GM23248 (cell line): ENCODE measurements at regions of chr1 and their contacts with region 1.

Region 1: GRCh38 chr1:77100870-77101269 is 118.4 kb downstream of the PIGK start:
- DNase-seq: peak; percentile 17
- H3K4me3 ChIP-seq: no peak overlapping the region
- H3K27ac ChIP-seq: no peak overlapping the region
- H3K4me1 ChIP-seq: peaks cover 8% of the 10 kb centered on the region
- H3K27me3 ChIP-seq: no peaks in the 10 kb centered on the region

Region 2: GRCh38 chr1:76901158-76901767 is 199.6 kb before region 1 on chr1:
- in situ Hi-C with region 1: loop called (anchors 10 kb)
- DNase-seq: peak; percentile 71
- H3K4me3 ChIP-seq: no peak overlapping the region
- H3K27ac ChIP-seq: no peak overlapping the region
- H3K4me1 ChIP-seq: no peaks in the 10 kb centered on the region
- H3K27me3 ChIP-seq: no peaks in the 10 kb centered on the region

Region 3: GRCh38 chr1:77413541-77414335 is 312.9 kb after region 1 on chr1:
- in situ Hi-C with region 1: no loop called
- DNase-seq: no peak
- H3K4me3 ChIP-seq: no peak overlapping the region
- H3K27ac ChIP-seq: no peak overlapping the region
- H3K4me1 ChIP-seq: peaks cover 10% of the 10 kb centered on the region; the same call in 1 of the 2 replicates
- H3K27me3 ChIP-seq: no peaks in the 10 kb centered on the region